MCF 10A (cell line): ENCODE measurements at regions of chr11 and their contacts with region 1.

Region 1: GRCh38 chr11:13668102-13668956 is at the start of gene FAR1:
- DNase-seq: peak; percentile 99
- H3K4me3 Mint-ChIP-seq: peak within 1 kb of the TSS; percentile 92
- H3K27ac Mint-ChIP-seq: peak within 1 kb of the TSS; percentile 91
- H3K4me1 Mint-ChIP-seq: peaks cover 45% of the 10 kb centered on the region
- H3K27me3 Mint-ChIP-seq: no peaks in the 10 kb centered on the region
- CTCF ChIP-seq: peak; percentile 36
- total RNA-seq, gene FAR1: 106 and 112 TPM in 2 replicates

Region 2: DNA sequence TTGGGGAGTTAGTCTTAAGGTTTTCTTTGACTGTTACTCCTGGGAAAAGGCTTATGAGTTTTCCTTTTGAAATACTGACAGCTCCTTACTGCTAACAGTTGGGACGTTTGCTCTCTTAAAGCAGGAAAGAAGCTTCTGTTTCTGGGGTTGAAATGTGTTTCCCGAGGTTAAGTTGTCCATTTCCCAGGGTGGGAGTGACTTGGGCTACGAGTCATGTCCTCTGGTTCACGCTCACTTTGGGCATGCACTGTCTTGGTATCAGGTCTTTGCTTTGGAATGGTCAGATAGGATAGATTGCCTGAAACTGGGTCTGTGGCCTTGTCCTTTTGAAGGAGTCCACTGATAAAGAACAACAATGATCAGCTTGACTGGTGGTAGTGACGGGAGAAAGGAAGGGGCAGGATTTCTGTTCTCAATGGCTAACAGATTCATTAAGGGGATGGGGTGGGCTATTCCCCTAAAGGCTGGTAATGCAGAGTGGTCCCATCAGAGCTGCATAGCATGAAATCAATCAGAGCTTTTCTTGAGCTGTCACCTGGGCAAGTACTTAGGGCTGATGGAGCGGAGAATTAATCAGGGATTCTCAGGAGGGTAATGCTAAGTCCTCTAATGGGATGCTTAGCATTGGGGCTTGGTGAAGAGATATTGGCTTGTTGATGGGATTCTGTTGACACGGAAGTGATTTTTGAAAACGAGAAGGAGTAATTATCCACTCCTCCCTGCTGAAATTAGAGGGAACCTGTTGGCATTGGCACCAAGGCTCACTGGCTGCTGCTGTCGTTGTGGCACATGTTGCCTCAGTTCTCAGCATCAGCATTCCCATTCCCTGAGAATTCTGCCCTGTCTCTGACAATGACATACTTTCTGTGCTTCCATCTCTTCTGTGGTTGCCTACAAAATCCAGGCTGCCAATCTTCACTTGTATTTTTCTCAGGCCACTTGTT is 912.5 kb before region 1 on chr11:
- CTCF ChIA-PET with region 1: no interaction called
- POLR2A ChIA-PET with region 1: no interaction called
- intact Hi-C with region 1: no loop called
- DNase-seq: peak; percentile 32
- H3K4me3 Mint-ChIP-seq: no peak overlapping the region
- H3K27ac Mint-ChIP-seq: peak overlapping the region; percentile 92
- H3K4me1 Mint-ChIP-seq: peaks cover 44% of the 10 kb centered on the region
- H3K27me3 Mint-ChIP-seq: no peaks in the 10 kb centered on the region
- CTCF ChIP-seq: no peak

Region 3: DNA sequence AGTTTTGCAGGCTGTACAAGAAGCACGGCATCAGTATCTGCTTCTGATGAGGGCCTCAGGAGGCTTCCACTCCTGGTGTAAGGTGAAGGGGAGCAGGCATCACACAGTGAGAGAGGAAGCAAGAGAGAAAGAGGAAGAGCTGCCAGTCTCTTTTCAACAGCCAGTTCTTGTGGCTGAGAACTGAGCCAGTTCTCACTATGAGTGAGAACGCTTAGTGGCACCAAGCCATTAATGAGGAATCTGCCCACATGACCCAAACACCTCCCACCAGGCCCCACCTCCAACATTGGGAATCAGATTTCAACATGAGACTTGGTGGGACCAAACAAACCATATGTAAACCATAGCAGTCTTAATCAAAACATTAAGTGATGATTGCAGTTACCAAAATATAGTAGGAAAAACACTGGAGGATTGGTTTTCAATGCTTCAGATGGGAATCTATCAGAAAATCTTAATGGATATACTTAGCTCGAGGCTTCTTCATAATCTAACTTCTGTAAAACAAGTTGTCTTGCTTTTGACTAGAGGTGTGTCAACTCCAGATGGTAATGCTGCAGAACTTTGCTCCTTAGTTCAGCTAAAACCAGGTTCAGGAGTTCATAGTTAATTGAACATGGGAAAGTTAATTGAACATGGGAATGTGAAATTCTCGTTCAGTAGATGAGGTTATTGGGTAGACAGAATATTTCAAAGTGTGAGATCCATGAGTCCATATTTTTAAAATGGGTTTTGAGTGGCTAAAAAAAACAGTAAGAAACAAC is 12.4 kb after region 1 on chr11:
- CTCF ChIA-PET with region 1: interaction called, 5 read pairs
- POLR2A ChIA-PET with region 1: interaction called, 20 read pairs
- intact Hi-C with region 1: no loop called
- DNase-seq: no peak
- H3K4me3 Mint-ChIP-seq: no peak overlapping the region
- H3K27ac Mint-ChIP-seq: no peak overlapping the region
- H3K4me1 Mint-ChIP-seq: peaks cover 15% of the 10 kb centered on the region
- H3K27me3 Mint-ChIP-seq: no peaks in the 10 kb centered on the region
- CTCF ChIP-seq: no peak

Region 4: GRCh38 chr11:13694115-13694514 is 25.8 kb after region 1 on chr11:
- CTCF ChIA-PET with region 1: interaction called, 11 read pairs
- POLR2A ChIA-PET with region 1: interaction called, 7 read pairs
- intact Hi-C with region 1: no loop called
- DNase-seq: no peak
- H3K4me3 Mint-ChIP-seq: no peak overlapping the region
- H3K27ac Mint-ChIP-seq: no peak overlapping the region
- H3K4me1 Mint-ChIP-seq: peaks cover 30% of the 10 kb centered on the region
- H3K27me3 Mint-ChIP-seq: no peaks in the 10 kb centered on the region
- CTCF ChIP-seq: no peak

Region 5: GRCh38 chr11:13999704-14000103 is 331.4 kb after region 1 on chr11:
- CTCF ChIA-PET with region 1: no interaction called
- POLR2A ChIA-PET with region 1: no interaction called
- intact Hi-C with region 1: no loop called
- DNase-seq: no peak
- H3K4me3 Mint-ChIP-seq: no peak overlapping the region
- H3K27ac Mint-ChIP-seq: no peak overlapping the region
- H3K4me1 Mint-ChIP-seq: no peaks in the 10 kb centered on the region
- H3K27me3 Mint-ChIP-seq: peaks cover 25% of the 10 kb centered on the region
- CTCF ChIP-seq: no peak